ENCODE measurements at regions of chr2 and their contacts with region 1.

Region 1: GRCh38 chr2:168136392-168136977 is 110.9 kb downstream of the STK39 start:
- DNase-seq: peak; percentile 36
- H3K4me3 ChIP-seq: no peak overlapping the region
- H3K27ac ChIP-seq: no peak overlapping the region
- H3K4me1 ChIP-seq: no peaks in the 10 kb centered on the region
- H3K27me3 ChIP-seq: no peaks in the 10 kb centered on the region
- CTCF ChIP-seq: peak; percentile 43 to 61

Region 2: DNA sequence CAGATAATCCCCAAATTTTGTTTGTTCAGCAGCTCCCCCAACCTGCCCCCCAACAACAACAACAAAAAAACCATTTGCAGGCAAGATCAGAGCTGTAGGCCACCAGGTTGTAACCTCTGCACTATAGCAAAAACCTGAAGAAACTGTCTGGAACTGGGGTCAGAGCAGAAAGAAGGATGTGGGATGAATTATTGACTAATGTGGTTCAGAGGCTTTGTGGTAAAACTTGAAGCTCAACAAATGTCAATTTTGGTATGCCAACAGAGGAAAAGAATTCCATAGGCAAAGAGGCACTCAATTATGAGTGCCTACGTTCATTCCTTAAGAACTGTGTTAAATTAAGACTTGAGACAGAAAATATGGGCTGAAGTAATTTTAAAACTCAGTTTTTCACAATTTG is 144.2 kb before region 1 on chr2:
- CTCF ChIA-PET with region 1: no interaction called
- dilution Hi-C with region 1: no loop called
- in situ Hi-C with region 1: no loop called
- intact Hi-C with region 1: no loop called
- DNase-seq: no peak
- H3K4me3 ChIP-seq: no peak overlapping the region
- H3K27ac ChIP-seq: no peak overlapping the region
- H3K4me1 ChIP-seq: no peaks in the 10 kb centered on the region
- H3K27me3 ChIP-seq: no peaks in the 10 kb centered on the region
- CTCF ChIP-seq: no peak

Region 3: DNA sequence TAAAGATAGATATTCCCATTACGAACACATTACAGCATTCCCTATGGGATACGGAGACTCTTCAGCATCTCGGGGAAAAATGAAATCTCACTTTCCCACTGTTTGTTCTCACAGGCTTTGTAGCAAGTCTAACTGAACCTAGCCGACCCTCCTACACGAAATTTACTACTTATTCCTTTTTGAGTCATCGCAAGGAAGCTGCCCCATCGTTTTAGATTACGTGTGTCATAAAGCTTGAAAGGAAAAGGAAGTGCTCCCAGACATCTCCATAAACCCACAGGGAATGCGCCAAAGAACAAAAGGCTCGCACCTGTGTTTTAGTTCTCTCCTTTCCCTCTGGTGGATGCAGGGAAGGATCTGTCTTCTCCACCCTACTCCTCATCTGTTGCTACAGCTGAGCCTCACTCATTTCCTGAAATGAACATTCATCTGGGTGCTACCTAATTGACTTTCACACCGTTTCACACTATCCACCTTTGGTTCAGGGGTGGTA is 187.1 kb after region 1 on chr2:
- CTCF ChIA-PET with region 1: no interaction called
- dilution Hi-C with region 1: no loop called
- in situ Hi-C with region 1: loop called in 1 of 2 experiments (anchors 10 kb)
- intact Hi-C with region 1: no loop called
- DNase-seq: no peak
- H3K4me3 ChIP-seq: no peak overlapping the region
- H3K27ac ChIP-seq: no peak overlapping the region
- H3K4me1 ChIP-seq: peaks cover 5% of the 10 kb centered on the region
- H3K27me3 ChIP-seq: peaks cover 3% of the 10 kb centered on the region
- CTCF ChIP-seq: no peak

Region 4: GRCh38 chr2:168336864-168337263 is 200.4 kb after region 1 on chr2:
- CTCF ChIA-PET with region 1: interaction called, 6 read pairs
- dilution Hi-C with region 1: no loop called
- in situ Hi-C with region 1: loop called in 1 of 2 experiments (anchors 10 kb)
- intact Hi-C with region 1: loop called (anchors 1 kb)
- DNase-seq: peak; percentile 83
- H3K4me3 ChIP-seq: no peak overlapping the region
- H3K27ac ChIP-seq: no peak overlapping the region
- H3K4me1 ChIP-seq: peaks cover 4% of the 10 kb centered on the region
- H3K27me3 ChIP-seq: no peaks in the 10 kb centered on the region
- CTCF ChIP-seq: peak; percentile 82 to 94